ENCODE measurements at regions of chr11 and their contacts with region 1.

Region 1: DNA sequence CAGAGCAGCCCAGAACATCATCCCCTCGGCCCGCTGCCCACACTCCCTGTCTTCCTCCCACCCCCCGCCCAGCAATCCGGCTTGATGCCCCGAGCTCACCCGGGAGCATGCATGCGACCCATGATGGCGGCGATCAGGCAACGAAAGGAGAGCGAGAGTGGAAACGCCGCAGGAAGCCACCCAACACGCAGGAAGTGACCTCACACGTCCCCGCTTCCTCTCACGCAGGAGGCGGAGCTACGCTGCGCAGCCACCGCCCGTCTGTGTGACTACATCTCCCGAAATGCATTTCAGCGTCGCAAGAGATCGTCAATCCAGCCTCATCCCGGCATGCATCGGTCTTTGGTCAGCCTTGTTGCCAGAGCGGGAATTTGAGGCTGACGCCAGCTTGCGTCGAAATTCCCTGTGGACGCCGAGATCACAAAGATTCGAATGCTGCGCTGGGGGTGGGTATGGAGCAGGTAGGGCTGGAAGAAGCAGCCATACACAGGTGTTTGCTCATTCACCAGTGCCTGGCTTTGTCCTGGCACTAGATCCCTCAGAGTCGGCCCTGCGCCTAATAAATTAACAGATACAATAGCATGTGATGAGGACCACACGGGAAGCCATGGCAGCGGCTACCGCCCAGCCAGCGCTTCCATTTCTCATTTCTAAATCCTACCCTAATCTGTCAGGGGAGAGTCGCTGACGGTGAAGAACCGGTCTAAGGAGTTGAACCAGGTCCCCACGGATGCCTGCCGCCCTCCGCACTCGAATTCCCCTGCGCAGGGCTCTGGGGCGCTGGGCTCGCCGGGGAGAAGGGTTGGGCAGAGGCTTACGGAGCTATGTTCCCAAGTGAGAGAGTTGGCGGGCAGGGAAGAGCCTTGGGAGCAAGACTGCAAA is at the start of gene RPS13:
- DNase-seq: peak; percentile 97
- ATAC-seq: peak; percentile 99
- H3K4me3 ChIP-seq: peak within 1 kb of the TSS; percentile 93 to 98 (median 97)
- H3K27ac ChIP-seq: peak within 1 kb of the TSS; percentile 96 to 97 (median 97)
- H3K4me1 ChIP-seq: peaks cover 26 to 27% of the 10 kb centered on the region in 2 donors
- H3K27me3 ChIP-seq: no peaks in the 10 kb centered on the region
- CTCF ChIP-seq: no peak
- POLR2A ChIP-seq: peak; percentile 85 to 86
- total RNA-seq, gene RPS13: 1,365 to 1,604 (median 1,491) TPM

Region 2: GRCh38 chr11:16738193-16738946 is 339.4 kb before region 1 on chr11 and contains the start of gene C11orf58:
- in situ Hi-C with region 1: no loop called
- intact Hi-C with region 1: loop called (anchors 5 kb)
- DNase-seq: peak; percentile 94 to 97
- ATAC-seq: peak; percentile 97 to 98
- H3K4me3 ChIP-seq: peak within 1 kb of the TSS; percentile 78 to 91 (median 87)
- H3K27ac ChIP-seq: peak within 1 kb of the TSS; percentile 94 to 97 (median 94)
- H3K4me1 ChIP-seq: peaks cover 37 to 41% of the 10 kb centered on the region in 2 donors
- H3K27me3 ChIP-seq: no peaks in the 10 kb centered on the region
- CTCF ChIP-seq: peak in 1 of 5 experiments; percentile 13
- POLR2A ChIP-seq: peak; percentile 94 to 95
- total RNA-seq, gene C11orf58: 103 to 170 (median 134) TPM

Region 3: GRCh38 chr11:17116121-17116520 is 38.4 kb after region 1 on chr11:
- in situ Hi-C with region 1: no loop called
- intact Hi-C with region 1: no loop called
- DNase-seq: no peak
- ATAC-seq: no peak
- H3K4me3 ChIP-seq: no peak overlapping the region
- H3K27ac ChIP-seq: no peak overlapping the region
- H3K4me1 ChIP-seq: no peaks in the 10 kb centered on the region
- H3K27me3 ChIP-seq: no peaks in the 10 kb centered on the region
- CTCF ChIP-seq: no peak
- POLR2A ChIP-seq: no peak

Region 4: DNA sequence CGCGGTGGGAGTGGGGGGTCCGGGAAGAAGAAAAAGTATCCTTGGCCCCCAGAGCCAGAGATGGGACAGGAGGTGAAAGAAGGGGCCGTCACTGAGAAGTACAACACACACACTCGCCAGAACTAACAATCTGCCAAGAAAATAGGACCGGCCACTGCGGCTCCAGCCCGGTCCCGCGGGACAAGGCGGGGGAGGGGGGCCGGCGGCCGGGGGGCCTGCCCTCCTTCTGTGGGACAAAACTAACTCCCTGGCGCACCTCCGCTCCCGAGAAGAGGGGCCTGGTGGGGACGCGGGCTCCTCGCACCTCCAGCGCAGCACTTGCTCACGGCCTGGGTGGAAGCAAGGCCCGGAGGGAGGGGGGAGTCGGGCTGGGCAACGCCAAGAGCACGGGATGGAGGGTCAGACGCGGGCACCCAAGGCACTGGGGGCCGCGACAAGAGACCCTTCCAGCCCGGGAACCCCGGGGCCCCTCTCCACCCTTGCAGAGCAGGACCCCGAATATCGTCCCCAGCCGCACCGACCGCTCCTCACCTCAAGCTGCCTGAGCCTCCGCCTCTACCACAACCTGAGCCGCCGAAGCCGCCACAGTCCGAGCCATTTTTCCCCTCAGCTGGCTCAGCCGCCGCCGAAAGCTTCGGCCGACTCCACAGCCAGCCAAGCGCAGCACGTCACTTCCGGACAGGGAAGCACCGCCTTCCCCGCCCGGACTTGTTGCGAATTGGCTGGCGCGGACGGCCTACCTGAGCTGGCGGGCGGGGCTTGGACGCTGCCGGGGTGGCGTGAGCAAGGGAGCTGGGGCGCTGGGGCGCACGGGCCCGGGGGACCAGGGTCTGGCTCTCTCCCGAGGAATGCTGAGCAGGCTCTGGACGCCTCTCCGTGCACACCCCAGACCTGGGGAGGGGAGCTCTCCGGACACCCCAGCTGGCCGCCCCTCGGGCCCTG is 129.8 kb after region 1 on chr11 and contains the start of gene PIK3C2A:
- in situ Hi-C with region 1: no loop called
- intact Hi-C with region 1: loop called (anchors 1 kb)
- DNase-seq: peak; percentile 95 to 96
- ATAC-seq: peak; percentile 93 to 96
- H3K4me3 ChIP-seq: peak within 1 kb of the TSS; percentile 89 to 97 (median 92)
- H3K27ac ChIP-seq: peak within 1 kb of the TSS; percentile 90 to 98 (median 96)
- H3K4me1 ChIP-seq: peaks cover 18 to 26% of the 10 kb centered on the region in 2 donors
- H3K27me3 ChIP-seq: no peaks in the 10 kb centered on the region
- CTCF ChIP-seq: no peak
- POLR2A ChIP-seq: peak; percentile 91 to 94
- total RNA-seq, gene PIK3C2A: 8.8 to 21.0 (median 14.8) TPM

Region 5: DNA sequence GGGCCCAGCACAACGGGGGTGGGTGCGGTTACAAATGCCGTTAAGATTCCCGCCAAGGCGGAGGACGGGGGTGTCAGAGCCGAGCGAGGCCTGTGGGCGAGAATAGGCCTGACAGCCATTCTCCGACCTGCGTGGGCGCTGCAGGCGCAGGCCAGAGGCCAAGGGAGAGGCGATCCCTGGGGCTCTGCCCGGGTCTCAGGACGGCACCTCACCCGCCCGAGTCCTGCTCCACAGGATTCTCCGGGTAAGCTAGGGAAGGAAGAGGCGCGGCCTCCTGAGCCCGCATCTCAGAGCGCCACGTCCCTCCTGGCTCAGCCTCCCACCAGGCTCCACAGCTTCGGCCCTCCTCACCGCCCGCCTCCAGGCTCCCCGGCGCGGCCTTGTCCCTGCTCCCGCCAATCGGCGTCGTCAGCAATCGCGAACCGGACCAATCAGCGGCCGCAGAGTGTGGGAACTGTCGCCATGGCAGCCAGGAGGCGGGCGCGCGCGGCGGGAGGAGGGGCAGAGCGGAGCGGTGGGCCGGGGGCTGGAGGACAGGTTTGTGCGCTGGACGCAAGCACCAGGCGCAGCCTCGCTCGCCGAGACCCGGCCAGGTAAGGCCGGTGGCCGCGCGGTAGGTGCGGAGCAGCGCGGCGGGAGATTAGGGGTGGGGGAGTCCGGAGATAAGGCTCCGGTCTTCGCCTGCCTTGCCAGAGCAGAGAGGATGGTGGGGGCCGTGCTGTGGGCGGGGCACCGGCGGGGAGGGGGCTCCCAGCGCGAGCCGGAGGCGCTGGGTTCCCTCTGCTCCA is 198.7 kb after region 1 on chr11 and contains the start of gene NUCB2:
- in situ Hi-C with region 1: loop called in 1 of 4 experiments (anchors 10 kb)
- intact Hi-C with region 1: loop called (anchors 5 kb)
- DNase-seq: peak; percentile 92 to 94
- ATAC-seq: peak; percentile 97
- H3K4me3 ChIP-seq: peak within 1 kb of the TSS; percentile 69 to 96 (median 91)
- H3K27ac ChIP-seq: peak within 1 kb of the TSS; percentile 88 to 93 (median 88)
- H3K4me1 ChIP-seq: peaks cover 11 to 19% of the 10 kb centered on the region in 2 donors
- H3K27me3 ChIP-seq: no peaks in the 10 kb centered on the region
- CTCF ChIP-seq: no peak
- POLR2A ChIP-seq: peak; percentile 42 to 68
- total RNA-seq, gene NUCB2: 15.1 to 59.1 (median 39.1) TPM

Region 6: DNA sequence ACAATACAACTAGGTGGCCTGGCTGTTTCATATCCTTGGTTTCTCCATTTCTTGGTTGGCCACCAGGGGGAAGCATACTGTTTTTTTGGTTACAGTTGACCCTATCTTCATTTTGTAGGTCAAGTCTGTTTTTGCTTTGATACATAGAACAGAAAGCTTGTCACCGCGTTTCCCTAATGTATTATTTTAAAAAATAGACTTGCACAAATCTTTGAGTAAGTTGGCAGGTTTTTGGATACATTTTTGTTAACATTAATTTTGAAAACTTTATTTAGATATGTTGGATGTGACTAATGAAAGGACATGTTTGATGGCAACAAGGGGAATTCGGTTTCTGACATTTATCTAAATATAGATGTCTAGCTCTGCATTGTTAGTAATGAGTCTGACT is 276.8 kb after region 1 on chr11:
- in situ Hi-C with region 1: no loop called
- intact Hi-C with region 1: loop called (anchors 5 kb)
- DNase-seq: peak; percentile 32 to 54
- ATAC-seq: peak; percentile 62 to 66
- H3K4me3 ChIP-seq: no peak overlapping the region
- H3K27ac ChIP-seq: no peak overlapping the region
- H3K4me1 ChIP-seq: peaks cover 17 to 24% of the 10 kb centered on the region in 2 donors
- H3K27me3 ChIP-seq: peaks cover 16 to 27% (median 25%) of the 10 kb centered on the region in 3 donors
- CTCF ChIP-seq: peak; percentile 41 to 72 (median 56)
- POLR2A ChIP-seq: no peak

Measured in gastrocnemius medialis (tissue), 4 donors.